IMR-90 (cell line): ENCODE measurements at regions of chr1 and their contacts with region 1.

Region 1: GRCh38 chr1:156226116-156226538 is 13.3 kb downstream of the PMF1 start:
- DNase-seq: no peak
- ATAC-seq: no peak
- H3K4me3 ChIP-seq: no peak overlapping the region
- H3K27ac ChIP-seq: no peak overlapping the region
- H3K4me1 ChIP-seq: peaks cover 4% of the 10 kb centered on the region; the same call in 1 of the 2 replicates
- H3K27me3 ChIP-seq: no peaks in the 10 kb centered on the region
- CTCF ChIP-seq: no peak
- POLR2A ChIP-seq: no peak
- RAD21 ChIP-seq: no peak

Region 2: GRCh38 chr1:156090822-156091188 is 135.3 kb before region 1 on chr1:
- CTCF ChIA-PET with region 1: interaction called, 10 read pairs
- POLR2A ChIA-PET with region 1: no interaction called
- dilution Hi-C with region 1: no loop called
- in situ Hi-C with region 1: loop called (anchors 5 kb)
- intact Hi-C with region 1: loop called (anchors 1 kb)
- DNase-seq: peak; percentile 71
- ATAC-seq: peak; percentile 90
- H3K4me3 ChIP-seq: no peak overlapping the region
- H3K27ac ChIP-seq: no peak overlapping the region
- H3K4me1 ChIP-seq: peaks cover 7% of the 10 kb centered on the region
- H3K27me3 ChIP-seq: no peaks in the 10 kb centered on the region
- CTCF ChIP-seq: peak; percentile 84
- POLR2A ChIP-seq: no peak
- RAD21 ChIP-seq: peak; percentile 91

Region 3: DNA sequence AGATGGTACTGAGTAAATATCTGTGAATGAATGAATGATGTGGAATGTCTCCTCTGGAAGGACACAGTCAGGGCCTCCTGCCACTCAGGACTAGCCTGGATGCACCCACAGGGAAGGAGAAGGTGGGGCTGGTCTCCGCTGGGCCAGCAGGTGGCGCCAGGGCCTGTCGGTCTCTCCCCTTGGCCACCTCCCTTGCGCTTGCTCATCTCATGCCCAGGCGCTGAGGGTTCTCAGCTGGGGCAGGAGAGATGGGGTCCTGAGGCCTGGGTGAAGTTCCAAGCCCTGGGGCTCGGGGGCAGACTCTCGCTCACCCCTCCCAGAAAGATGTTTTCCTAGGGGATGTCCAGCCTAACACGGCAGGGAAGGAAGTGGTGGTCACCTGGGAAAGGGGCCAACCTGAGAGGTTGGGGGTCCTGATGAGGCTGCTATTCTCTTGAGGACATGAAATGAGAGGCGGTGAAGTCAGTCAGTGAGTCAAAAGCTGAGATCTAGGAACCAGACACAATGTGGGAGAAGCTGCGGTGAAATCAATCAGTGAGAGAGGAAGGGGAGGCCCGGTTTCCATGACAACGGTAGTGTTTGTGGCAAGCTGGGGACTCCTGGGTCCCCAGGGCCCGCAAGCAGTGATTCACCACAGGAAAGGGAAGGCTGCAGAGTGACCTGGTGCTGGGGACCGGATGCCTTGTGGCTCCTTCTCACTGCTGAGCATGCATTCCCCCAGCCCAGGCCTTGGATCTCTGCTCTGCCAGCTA is 129.3 kb before region 1 on chr1:
- CTCF ChIA-PET with region 1: interaction called, 10 read pairs
- POLR2A ChIA-PET with region 1: no interaction called
- dilution Hi-C with region 1: no loop called
- in situ Hi-C with region 1: loop called (anchors 5 kb)
- intact Hi-C with region 1: loop called (anchors 1 kb)
- DNase-seq: peak; percentile 78
- ATAC-seq: peak; percentile 99
- H3K4me3 ChIP-seq: no peak overlapping the region
- H3K27ac ChIP-seq: peak overlapping the region; percentile 73
- H3K4me1 ChIP-seq: peaks cover 9% of the 10 kb centered on the region
- H3K27me3 ChIP-seq: no peaks in the 10 kb centered on the region
- CTCF ChIP-seq: peak; percentile 98
- POLR2A ChIP-seq: peak; percentile 43; the same call in 1 of the 2 replicates
- RAD21 ChIP-seq: peak; percentile 97

Region 4: DNA sequence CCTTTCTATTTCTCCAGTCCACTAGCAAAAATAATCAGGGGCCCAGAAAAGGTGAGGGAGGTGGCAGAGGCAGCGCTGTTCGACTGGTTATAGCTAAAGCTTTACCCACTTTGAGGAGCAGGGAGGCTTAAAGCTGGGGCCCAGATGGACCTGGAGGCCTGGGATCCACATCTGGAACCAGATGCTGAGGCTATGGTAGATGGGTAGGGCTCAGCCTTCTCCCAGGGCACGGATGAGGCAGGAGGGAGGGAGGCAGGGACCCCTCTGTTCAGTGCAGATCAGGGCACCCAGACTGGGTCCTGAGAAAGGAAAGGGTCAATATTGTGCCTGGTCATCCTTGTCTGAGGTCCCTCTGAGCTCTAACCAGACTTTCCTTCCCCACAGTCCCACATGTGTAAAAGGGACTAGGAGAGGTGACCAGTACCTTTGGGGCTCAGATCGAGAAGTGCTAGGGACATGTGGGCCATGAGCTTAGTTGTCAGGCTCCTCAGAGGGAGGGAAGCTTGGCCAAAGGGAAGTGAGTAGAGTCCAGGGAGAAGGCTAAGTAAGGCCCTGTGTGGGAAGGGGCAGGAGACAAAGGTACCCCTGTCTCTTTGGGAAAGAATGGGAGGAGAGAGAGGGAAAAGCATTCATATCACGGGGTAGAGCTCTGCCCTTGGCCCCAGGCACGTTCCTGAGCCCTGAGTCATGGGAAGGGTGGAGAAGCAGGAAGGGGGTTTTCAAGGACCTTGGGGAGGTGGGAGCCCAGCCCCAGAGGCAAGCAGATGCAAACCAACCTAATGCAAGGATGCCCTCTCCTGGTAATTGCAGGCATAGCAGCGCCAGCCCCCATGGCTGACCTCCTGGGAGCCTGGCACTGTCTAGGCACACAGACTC is 96.2 kb before region 1 on chr1:
- CTCF ChIA-PET with region 1: interaction called, 11 read pairs
- POLR2A ChIA-PET with region 1: no interaction called
- dilution Hi-C with region 1: no loop called
- in situ Hi-C with region 1: no loop called
- intact Hi-C with region 1: no loop called
- DNase-seq: peak; percentile 97
- ATAC-seq: peak; percentile 53
- H3K4me3 ChIP-seq: no peak overlapping the region
- H3K27ac ChIP-seq: peak overlapping the region; percentile 95
- H3K4me1 ChIP-seq: peaks cover 38% of the 10 kb centered on the region
- H3K27me3 ChIP-seq: no peaks in the 10 kb centered on the region
- CTCF ChIP-seq: peak; percentile 92
- POLR2A ChIP-seq: peak; percentile 79
- RAD21 ChIP-seq: peak; percentile 90

Region 5: GRCh38 chr1:156146020-156146768 is 79.9 kb before region 1 on chr1:
- CTCF ChIA-PET with region 1: interaction called, 7 read pairs
- POLR2A ChIA-PET with region 1: no interaction called
- dilution Hi-C with region 1: no loop called
- in situ Hi-C with region 1: loop called (anchors 5 kb)
- intact Hi-C with region 1: loop called (anchors 1 kb)
- DNase-seq: peak; percentile 94
- ATAC-seq: peak; percentile 74
- H3K4me3 ChIP-seq: no peak overlapping the region
- H3K27ac ChIP-seq: no peak overlapping the region
- H3K4me1 ChIP-seq: peaks cover 11% of the 10 kb centered on the region; the same call in 1 of the 2 replicates
- H3K27me3 ChIP-seq: peaks cover 14% of the 10 kb centered on the region; the same call in 1 of the 2 replicates
- CTCF ChIP-seq: peak; percentile 78
- POLR2A ChIP-seq: peak; percentile 57; the same call in 1 of the 2 replicates
- RAD21 ChIP-seq: peak; percentile 80

Region 6: GRCh38 chr1:156180471-156180870 is 45.7 kb before region 1 on chr1:
- CTCF ChIA-PET with region 1: no interaction called
- POLR2A ChIA-PET with region 1: no interaction called
- dilution Hi-C with region 1: no loop called
- in situ Hi-C with region 1: no loop called
- intact Hi-C with region 1: no loop called
- DNase-seq: no peak
- ATAC-seq: no peak
- H3K4me3 ChIP-seq: no peak overlapping the region
- H3K27ac ChIP-seq: no peak overlapping the region
- H3K4me1 ChIP-seq: no peaks in the 10 kb centered on the region
- H3K27me3 ChIP-seq: peaks cover 13% of the 10 kb centered on the region; the same call in 1 of the 2 replicates
- CTCF ChIP-seq: no peak
- POLR2A ChIP-seq: no peak
- RAD21 ChIP-seq: no peak

Region 7: DNA sequence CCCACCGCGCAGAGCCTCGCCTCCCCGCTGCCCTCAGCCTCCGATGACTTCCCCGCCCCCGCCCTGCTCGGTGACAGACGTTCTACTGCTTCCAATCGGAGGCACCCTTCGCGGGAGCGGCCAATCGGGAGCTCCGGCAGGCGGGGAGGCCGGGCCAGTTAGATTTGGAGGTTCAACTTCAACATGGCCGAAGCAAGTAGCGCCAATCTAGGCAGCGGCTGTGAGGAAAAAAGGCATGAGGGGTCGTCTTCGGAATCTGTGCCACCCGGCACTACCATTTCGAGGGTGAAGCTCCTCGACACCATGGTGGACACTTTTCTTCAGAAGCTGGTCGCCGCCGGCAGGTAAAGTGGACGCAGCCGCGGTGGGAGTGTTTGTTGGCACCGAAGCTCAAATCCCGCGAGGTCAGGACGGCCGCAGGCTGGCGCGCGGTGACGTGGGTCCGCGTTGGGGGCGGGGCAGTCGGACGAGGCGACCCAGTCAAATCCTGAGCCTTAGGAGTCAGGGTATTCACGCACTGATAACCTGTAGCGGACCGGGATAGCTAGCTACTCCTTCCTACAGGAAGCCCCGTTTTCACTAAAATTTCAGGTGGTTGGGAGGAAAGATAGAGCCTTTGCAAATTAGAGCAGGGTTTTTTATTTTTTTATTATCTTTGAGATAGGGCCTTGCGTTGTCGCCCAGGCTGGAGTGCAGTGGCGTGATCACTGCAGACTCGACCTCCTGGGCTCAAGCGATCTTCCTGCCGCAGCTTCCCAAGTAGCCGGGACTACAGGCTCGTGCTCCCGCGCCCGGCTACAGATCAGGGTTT is 13.1 kb before region 1 on chr1 and contains the start of gene PMF1:
- CTCF ChIA-PET with region 1: interaction called, 11 read pairs
- POLR2A ChIA-PET with region 1: interaction called, 3 read pairs
- dilution Hi-C with region 1: no loop called
- in situ Hi-C with region 1: no loop called
- intact Hi-C with region 1: no loop called
- DNase-seq: peak; percentile 94
- ATAC-seq: peak; percentile 99
- H3K4me3 ChIP-seq: peak within 1 kb of the TSS; percentile 74
- H3K27ac ChIP-seq: peak within 1 kb of the TSS; percentile 93
- H3K4me1 ChIP-seq: 0 out of 2 replicates have a peak, but pooled peaks cover 2% of the 10 kb centered on the region
- H3K27me3 ChIP-seq: no peaks in the 10 kb centered on the region
- CTCF ChIP-seq: no peak
- POLR2A ChIP-seq: peak; percentile 89
- RAD21 ChIP-seq: no peak
- total RNA-seq, gene PMF1: 54.8 and 62.5 TPM in 2 replicates

Region 8: GRCh38 chr1:156379420-156380165 is 153.5 kb after region 1 on chr1:
- CTCF ChIA-PET with region 1: no interaction called
- POLR2A ChIA-PET with region 1: no interaction called
- dilution Hi-C with region 1: no loop called
- in situ Hi-C with region 1: no loop called
- intact Hi-C with region 1: no loop called
- DNase-seq: peak; percentile 5
- ATAC-seq: no peak
- H3K4me3 ChIP-seq: no peak overlapping the region
- H3K27ac ChIP-seq: no peak overlapping the region
- H3K4me1 ChIP-seq: no peaks in the 10 kb centered on the region
- H3K27me3 ChIP-seq: peaks cover 9% of the 10 kb centered on the region; the same call in 1 of the 2 replicates
- CTCF ChIP-seq: no peak
- POLR2A ChIP-seq: no peak
- RAD21 ChIP-seq: no peak

Region 9: GRCh38 chr1:156540791-156541383 is 314.8 kb after region 1 on chr1:
- CTCF ChIA-PET with region 1: no interaction called
- POLR2A ChIA-PET with region 1: no interaction called
- dilution Hi-C with region 1: no loop called
- in situ Hi-C with region 1: no loop called
- intact Hi-C with region 1: no loop called
- DNase-seq: peak; percentile 20
- ATAC-seq: no peak
- H3K4me3 ChIP-seq: no peak overlapping the region
- H3K27ac ChIP-seq: no peak overlapping the region
- H3K4me1 ChIP-seq: no peaks in the 10 kb centered on the region
- H3K27me3 ChIP-seq: no peaks in the 10 kb centered on the region
- CTCF ChIP-seq: no peak
- POLR2A ChIP-seq: no peak
- RAD21 ChIP-seq: no peak